Activated naive CD4-positive, alpha-beta T cell treated with anti-CD3 and anti-CD28 coated beads for 36 hours (primary cell): ENCODE measurements at regions of chr1 and their contacts with region 1.

Region 1: DNA sequence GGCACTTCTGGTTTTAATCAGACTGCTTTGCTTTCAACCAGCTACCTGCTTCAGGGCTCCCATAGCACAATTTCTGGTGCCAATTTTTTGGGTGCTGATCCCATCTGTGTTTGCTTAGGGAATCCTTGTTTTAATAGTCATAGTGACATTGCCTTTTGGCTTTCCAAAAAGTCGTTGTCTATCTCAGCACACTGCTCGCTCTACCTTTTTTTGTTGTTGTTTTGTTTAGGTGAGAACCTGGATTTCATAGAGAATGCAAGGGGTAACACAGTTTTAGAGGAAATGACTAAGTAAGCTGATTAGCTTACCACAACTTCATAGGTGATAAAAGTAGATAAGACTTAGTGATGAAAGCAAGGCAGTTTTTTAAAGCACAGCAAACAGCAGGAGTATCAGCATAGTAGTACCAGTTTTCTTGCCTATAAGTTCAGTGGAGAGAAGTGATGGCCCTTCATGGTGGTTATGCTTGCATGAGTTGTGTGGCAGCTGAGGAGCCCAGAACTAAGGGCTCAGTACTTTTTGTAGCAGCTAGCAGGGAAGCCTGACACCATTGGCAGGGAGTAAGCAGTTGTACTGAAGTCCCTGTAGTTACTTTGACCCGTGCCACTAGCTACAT is 31.3 kb downstream of the NEK7 start:
- DNase-seq: no peak
- H3K4me3 Mint-ChIP-seq: peak overlapping the region; percentile 16
- H3K27ac Mint-ChIP-seq: peak overlapping the region; percentile 20
- H3K4me1 Mint-ChIP-seq: peaks cover 72% of the 10 kb centered on the region
- H3K27me3 Mint-ChIP-seq: no peaks in the 10 kb centered on the region

Region 2: DNA sequence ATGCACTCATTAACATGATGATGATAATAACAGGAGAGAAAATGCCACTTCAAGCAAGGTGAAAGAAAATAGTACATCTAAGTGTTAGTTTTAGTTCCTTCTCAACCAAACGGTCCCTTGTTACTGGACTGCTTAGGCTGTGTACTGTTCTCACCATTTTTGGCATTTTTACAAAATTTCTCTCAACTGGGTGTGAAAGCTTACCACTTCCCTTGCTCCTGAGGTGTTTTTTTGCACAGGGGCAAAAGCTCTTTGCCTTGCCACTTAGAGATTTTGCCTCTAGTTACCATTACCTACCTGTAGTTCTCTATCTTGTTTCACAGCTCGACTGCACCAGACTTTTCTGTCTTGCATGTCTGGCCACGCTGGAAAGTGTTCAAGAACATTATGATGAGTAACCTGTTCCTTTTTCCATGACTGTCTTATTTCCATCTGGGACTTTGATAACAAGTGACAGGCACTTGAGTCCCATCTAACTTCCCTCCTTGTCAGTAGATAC is 20.6 kb before region 1 on chr1:
- CTCF ChIA-PET with region 1: interaction called, 3 read pairs
- intact Hi-C with region 1: loop called (anchors 1 kb)
- DNase-seq: peak; percentile 44
- H3K4me3 Mint-ChIP-seq: peak overlapping the region; percentile 55
- H3K27ac Mint-ChIP-seq: peak overlapping the region; percentile 93
- H3K4me1 Mint-ChIP-seq: peaks cover 90% of the 10 kb centered on the region
- H3K27me3 Mint-ChIP-seq: no peaks in the 10 kb centered on the region

Region 3: DNA sequence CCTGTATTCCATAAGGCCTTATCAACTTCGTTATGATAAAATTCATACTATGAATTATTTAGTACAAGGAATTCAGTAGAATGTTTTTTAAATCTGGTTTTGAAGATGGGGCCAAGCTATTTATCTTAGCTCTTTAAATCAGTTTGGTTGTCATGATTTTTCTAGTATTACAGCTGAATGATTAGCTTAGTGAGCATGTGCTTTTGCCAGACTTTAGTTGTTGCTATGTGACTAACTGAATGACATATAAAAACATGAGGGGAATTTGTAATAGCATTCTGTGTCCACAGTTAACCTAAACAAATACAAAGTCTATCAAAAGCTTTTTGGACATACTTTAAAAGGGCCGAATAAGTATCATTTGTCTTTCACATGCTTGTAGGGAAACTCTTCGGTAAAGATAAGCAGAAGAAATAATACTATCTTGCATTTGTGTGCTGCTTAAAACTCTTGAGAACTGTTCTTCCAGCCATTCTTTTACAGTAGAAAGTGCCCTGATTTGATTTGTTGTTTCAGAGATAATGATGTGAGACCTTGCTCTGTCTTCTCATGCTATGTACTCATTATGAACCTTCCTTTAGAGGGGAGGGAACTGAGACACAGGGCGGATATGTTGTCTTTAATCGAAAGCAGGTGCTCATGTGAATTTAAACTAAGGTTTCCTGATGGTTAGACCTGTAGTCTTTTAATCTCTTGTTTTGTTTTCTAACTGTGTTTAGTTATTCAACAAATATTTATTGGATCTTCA is 12.5 kb before region 1 on chr1:
- CTCF ChIA-PET with region 1: interaction called, 3 read pairs
- intact Hi-C with region 1: loop called (anchors 1 kb)
- DNase-seq: peak; percentile 43
- H3K4me3 Mint-ChIP-seq: peak overlapping the region; percentile 34
- H3K27ac Mint-ChIP-seq: peak overlapping the region; percentile 80
- H3K4me1 Mint-ChIP-seq: peaks cover 91% of the 10 kb centered on the region
- H3K27me3 Mint-ChIP-seq: no peaks in the 10 kb centered on the region

Region 4: DNA sequence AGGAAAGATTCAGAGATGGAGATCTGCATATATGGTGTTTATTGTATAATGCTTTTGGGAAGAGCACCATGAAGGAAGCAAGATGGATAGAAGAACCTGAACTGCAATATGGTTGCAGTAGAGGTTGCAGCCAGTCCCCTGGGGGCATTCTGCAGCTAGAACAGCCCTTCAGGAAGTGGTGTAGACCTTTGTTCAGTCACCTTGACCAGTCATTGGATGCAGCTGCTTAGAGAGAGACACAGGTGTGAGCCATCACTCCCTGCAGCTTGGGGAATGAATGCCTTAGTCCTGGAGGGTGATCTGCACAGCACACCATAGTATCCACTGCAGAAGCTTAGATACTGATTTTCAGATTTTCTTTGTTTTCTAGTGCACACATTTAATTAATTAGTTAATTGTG is 11.0 kb after region 1 on chr1:
- CTCF ChIA-PET with region 1: no interaction called
- intact Hi-C with region 1: loop called (anchors 1 kb)
- DNase-seq: no peak
- H3K4me3 Mint-ChIP-seq: no peak overlapping the region
- H3K27ac Mint-ChIP-seq: no peak overlapping the region
- H3K4me1 Mint-ChIP-seq: peaks cover 72% of the 10 kb centered on the region
- H3K27me3 Mint-ChIP-seq: no peaks in the 10 kb centered on the region